KBM-7 (cell line): ENCODE measurements at regions of chr4 and their contacts with region 1.

Region 1: DNA sequence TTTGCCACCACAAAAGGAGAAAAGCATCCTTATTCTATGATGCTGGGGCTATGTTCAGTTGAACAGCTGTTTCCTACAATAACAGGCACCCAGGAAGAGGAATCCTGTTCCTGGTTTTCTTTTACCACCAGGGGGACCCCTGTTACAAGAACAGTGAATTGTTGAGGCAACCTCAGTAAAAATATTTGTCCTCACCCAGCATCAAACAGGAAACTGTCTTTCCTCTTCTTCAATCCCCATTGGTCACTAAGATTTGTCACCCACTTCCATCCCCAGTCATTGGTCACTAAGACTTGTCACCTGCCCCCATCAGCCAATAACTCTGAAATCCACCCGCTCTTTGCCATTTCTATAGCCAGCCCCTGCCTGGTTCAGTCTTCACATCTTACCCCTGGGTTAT is 143.5 kb upstream of the GALNT7 start:
- DNase-seq: peak; percentile 77

Region 2: DNA sequence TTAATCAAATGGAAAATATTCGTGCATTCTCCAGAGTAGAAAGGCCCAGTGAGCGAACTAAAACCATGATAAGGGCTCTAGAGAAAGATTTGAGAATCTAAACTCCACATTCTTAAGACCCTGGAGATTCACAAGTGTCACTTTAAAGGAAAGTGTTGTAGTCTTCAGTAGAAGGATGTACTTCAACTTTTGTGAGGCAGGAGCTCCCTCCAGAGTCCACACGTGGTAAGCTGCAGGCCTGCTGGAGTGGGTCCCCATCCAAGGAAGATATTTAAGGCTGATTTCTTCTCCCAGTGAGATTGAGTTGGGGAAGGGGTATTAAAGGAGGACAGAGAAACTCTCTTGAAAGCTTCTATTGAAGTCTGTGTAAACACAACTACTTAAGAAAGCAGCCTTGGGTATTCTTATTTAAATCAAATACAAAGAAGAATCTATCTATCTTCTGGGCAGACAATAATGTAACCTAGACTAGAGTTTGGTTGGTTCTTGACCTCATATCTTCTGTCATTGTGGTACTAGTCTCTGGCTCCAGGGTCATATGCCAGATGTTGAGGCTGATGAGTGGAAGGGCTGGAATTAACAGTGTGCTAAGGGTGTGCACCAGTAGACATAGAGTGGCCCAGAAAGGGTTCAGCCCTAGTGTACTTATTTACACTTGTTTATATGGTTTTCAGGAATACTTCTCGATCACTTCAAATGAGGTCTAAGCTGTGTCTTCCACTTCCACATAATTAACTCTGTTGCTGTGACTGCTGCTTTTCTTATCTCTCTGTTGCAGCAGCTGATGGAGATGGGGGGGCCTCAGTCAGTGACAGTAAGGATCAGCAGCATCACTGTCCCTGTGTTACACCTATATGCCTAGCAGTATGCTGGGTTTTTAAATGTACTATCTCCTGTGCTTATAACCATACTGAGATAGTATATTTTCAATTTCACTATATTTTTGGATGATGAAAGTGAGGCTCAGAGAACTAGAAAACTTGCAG is 232.9 kb after region 1 on chr4:
- in situ Hi-C with region 1: loop called (anchors 10 kb)
- DNase-seq: peak; percentile 68